Activated T-helper 1 cell treated with anti-CD3 and anti-CD28 coated beads, Interleukin-12 subunit alpha, Interleukin-12 subunit beta, Interleukin-2, Interleukin-4 antibody, amounts not matched to agents 30 ng/mL and 10 ng/mL and 1 ng/mL, durations not matched to agents 14 hours and 24 hours and 36 hours (primary cell): ENCODE measurements at regions of chr2 and their contacts with region 1.

Region 1: GRCh38 chr2:199955339-199956261 is at the starts of genes MAIP1 and TYW5:
- DNase-seq: peak; percentile 73
- H3K4me3 Mint-ChIP-seq: peak within 1 kb of the TSS; percentile 99
- H3K27ac Mint-ChIP-seq: peak within 1 kb of the TSS; percentile 93
- H3K4me1 Mint-ChIP-seq: peaks cover 62% of the 10 kb centered on the region
- H3K27me3 Mint-ChIP-seq: no peaks in the 10 kb centered on the region
- total RNA-seq, gene MAIP1: 24.7 and 27.1 TPM in 2 replicates
- total RNA-seq, gene TYW5: 11.7 and 13.9 TPM in 2 replicates

Region 2: DNA sequence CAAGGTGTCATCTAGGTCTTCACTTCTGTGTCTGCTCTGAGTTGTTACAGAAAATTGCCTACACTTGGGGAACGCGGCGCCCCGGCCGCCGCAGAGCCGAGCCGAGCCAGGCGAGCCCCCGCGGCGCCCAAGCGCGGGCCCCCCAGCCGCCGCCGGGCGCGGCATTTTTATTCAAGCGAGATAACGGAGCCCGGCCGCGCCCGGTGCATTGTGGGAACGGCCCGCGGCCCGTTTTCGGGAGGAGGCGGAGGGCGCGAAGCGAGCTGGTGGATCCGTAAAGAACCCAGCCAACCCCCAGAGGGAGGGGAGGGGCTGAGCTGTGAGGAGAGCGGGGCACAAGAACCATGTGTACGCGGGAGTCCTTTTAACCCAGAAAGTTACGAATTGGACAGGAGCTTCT is 296.4 kb before region 1 on chr2:
- intact Hi-C with region 1: no loop called
- DNase-seq: no peak
- H3K4me3 Mint-ChIP-seq: no peak overlapping the region
- H3K27ac Mint-ChIP-seq: no peak overlapping the region
- H3K4me1 Mint-ChIP-seq: no peaks in the 10 kb centered on the region
- H3K27me3 Mint-ChIP-seq: peaks cover 5% of the 10 kb centered on the region

Region 3: GRCh38 chr2:199850718-199851500 is 104.7 kb before region 1 on chr2 and contains the start of gene FTCDNL1:
- intact Hi-C with region 1: loop called (anchors 5 kb)
- DNase-seq: peak; percentile 66
- H3K4me3 Mint-ChIP-seq: peak within 1 kb of the TSS; percentile 94
- H3K27ac Mint-ChIP-seq: peak within 1 kb of the TSS; percentile 86
- H3K4me1 Mint-ChIP-seq: peaks cover 6% of the 10 kb centered on the region
- H3K27me3 Mint-ChIP-seq: peaks cover 15% of the 10 kb centered on the region
- total RNA-seq, gene FTCDNL1: 1.7 and 2.1 TPM in 2 replicates

Region 4: DNA sequence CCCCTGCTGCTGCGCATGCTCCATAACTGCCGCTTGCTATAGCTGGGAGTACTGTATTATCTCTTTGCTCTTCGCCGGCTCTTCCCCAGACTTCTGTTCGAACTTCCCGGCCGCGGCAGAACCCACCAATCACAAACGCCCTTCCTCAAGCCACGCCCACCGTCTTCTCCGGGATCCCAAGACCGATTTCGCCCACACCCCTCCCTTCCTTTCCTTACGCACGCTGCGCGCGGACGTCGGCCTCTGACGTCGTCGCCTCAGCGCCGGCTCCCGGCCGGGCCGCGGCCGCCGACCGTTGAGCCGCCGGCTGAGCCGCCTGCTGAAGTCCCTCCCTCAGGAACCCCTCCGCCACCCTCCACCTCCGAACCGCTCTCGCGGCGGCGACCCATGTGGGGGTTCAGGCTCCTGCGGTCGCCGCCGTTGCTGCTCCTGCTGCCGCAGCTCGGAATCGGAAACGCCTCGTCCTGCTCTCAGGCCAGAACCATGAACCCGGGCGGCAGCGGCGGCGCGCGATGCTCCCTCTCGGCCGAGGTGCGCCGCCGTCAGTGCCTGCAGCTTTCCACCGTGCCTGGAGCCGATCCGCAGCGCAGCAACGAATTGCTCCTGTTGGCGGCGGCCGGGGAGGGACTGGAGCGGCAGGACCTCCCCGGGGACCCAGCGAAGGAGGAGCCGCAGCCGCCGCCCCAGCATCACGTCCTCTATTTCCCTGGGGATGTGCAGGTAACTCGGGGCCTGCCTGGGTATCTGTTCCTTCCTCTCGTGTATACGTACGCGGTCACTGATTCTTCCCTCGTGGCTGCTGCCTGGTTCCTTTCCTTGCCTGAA is 44.3 kb before region 1 on chr2 and contains the start of gene C2orf69:
- intact Hi-C with region 1: loop called (anchors 1 kb)
- DNase-seq: peak; percentile 86
- H3K4me3 Mint-ChIP-seq: peak within 1 kb of the TSS; percentile 100
- H3K27ac Mint-ChIP-seq: peak within 1 kb of the TSS; percentile 99
- H3K4me1 Mint-ChIP-seq: peaks cover 39% of the 10 kb centered on the region
- H3K27me3 Mint-ChIP-seq: peaks cover 3% of the 10 kb centered on the region
- total RNA-seq, gene C2orf69: 16.6 and 18.0 TPM in 2 replicates

Region 5: GRCh38 chr2:199926806-199927205 is 28.8 kb before region 1 on chr2:
- intact Hi-C with region 1: loop called (anchors 2 kb)
- DNase-seq: no peak
- H3K4me3 Mint-ChIP-seq: no peak overlapping the region
- H3K27ac Mint-ChIP-seq: no peak overlapping the region
- H3K4me1 Mint-ChIP-seq: peaks cover 26% of the 10 kb centered on the region
- H3K27me3 Mint-ChIP-seq: no peaks in the 10 kb centered on the region

Region 6: DNA sequence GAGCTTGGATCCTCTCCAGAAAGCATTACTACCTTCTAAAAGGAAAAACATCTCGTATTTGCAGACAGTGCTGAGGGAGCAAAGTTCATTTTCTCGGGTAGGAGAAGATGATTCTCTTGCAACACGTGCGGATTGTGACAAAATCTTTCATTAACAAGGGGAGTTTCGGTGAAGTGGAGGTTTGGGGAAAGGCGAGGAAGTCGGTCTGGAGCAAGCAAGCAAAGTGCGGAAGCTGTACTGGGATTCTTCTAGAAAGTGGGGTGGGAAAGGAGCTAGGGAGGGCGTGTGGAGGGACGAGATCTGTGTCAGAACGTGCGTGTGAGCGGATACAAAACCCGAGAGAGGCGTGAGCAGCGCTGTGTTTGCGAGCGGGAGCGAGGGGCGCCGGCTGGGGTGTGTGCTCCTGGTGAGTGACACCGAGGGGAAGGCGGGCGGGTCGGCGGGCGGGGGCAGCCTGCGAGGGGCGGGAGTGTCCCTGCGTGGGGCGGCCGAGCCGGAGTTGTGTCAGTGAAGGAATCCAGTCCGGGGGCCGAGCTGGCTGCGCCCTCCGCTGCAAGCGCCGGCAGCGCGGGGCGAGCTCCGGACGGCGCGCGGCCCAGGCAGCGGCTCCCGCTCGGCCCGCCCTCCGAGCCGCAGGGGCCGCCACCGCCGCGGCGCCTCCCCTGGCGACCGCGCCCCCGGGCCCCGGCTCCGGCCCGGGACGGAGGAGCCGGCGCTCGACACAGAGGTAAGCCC is 350.8 kb after region 1 on chr2 and contains the start of gene SPATS2L:
- intact Hi-C with region 1: loop called (anchors 2 kb)
- DNase-seq: peak; percentile 44
- H3K4me3 Mint-ChIP-seq: peak within 1 kb of the TSS; percentile 90
- H3K27ac Mint-ChIP-seq: peak within 1 kb of the TSS; percentile 85
- H3K4me1 Mint-ChIP-seq: peaks cover 35% of the 10 kb centered on the region
- H3K27me3 Mint-ChIP-seq: peaks cover 10% of the 10 kb centered on the region
- total RNA-seq, gene SPATS2L: 35.1 and 38.0 TPM in 2 replicates

Region 7: GRCh38 chr2:200677721-200678585 is 722.4 kb after region 1 on chr2:
- intact Hi-C with region 1: no loop called
- DNase-seq: no peak
- H3K4me3 Mint-ChIP-seq: no peak overlapping the region
- H3K27ac Mint-ChIP-seq: no peak overlapping the region
- H3K4me1 Mint-ChIP-seq: peaks cover 7% of the 10 kb centered on the region
- H3K27me3 Mint-ChIP-seq: peaks cover 7% of the 10 kb centered on the region